CD8-positive, alpha-beta T cell (primary cell): ENCODE measurements at regions of chr1 and their contacts with region 1.

Region 1: GRCh38 chr1:175129997-175130648 is 62.5 kb downstream of the KIAA0040 start:
- DNase-seq: no peak
- ATAC-seq: no peak
- H3K4me3 ChIP-seq: no peak overlapping the region
- H3K4me3 Mint-ChIP-seq: no peak overlapping the region
- H3K27ac ChIP-seq: no peak overlapping the region
- H3K27ac Mint-ChIP-seq: no peak overlapping the region
- H3K4me1 ChIP-seq: no peaks in the 10 kb centered on the region
- H3K4me1 Mint-ChIP-seq: no peaks in the 10 kb centered on the region
- H3K27me3 ChIP-seq: no peaks in the 10 kb centered on the region
- H3K27me3 Mint-ChIP-seq: peaks cover 11% of the 10 kb centered on the region
- CTCF ChIP-seq: no peak

Region 2: GRCh38 chr1:173409613-173410012 is 1720.5 kb before region 1 on chr1:
- CTCF ChIA-PET with region 1: no interaction called
- POLR2A ChIA-PET with region 1: no interaction called
- intact Hi-C with region 1: loop called in 1 of 2 experiments (anchors 10 kb)
- DNase-seq: peak in 5 of 9 experiments; percentile 16 to 63 (median 44)
- ATAC-seq: peak; percentile 42
- H3K4me3 ChIP-seq: no peak overlapping the region
- H3K4me3 Mint-ChIP-seq: peak overlapping the region; percentile 47
- H3K27ac ChIP-seq: no peak overlapping the region
- H3K27ac Mint-ChIP-seq: peak overlapping the region; percentile 41
- H3K4me1 ChIP-seq: peaks cover 31% of the 10 kb centered on the region
- H3K4me1 Mint-ChIP-seq: peaks cover 35% of the 10 kb centered on the region
- H3K27me3 ChIP-seq: no peaks in the 10 kb centered on the region
- H3K27me3 Mint-ChIP-seq: no peaks in the 10 kb centered on the region
- CTCF ChIP-seq: no peak

Region 3: GRCh38 chr1:174262349-174263241 is 867.5 kb before region 1 on chr1:
- CTCF ChIA-PET with region 1: interaction called, 3 read pairs
- POLR2A ChIA-PET with region 1: no interaction called
- intact Hi-C with region 1: loop called (anchors 10 kb)
- DNase-seq: peak in 2 of 9 experiments; percentile 33 to 52
- ATAC-seq: no peak
- H3K4me3 ChIP-seq: no peak overlapping the region
- H3K4me3 Mint-ChIP-seq: no peak overlapping the region
- H3K27ac ChIP-seq: no peak overlapping the region
- H3K27ac Mint-ChIP-seq: no peak overlapping the region
- H3K4me1 ChIP-seq: no peaks in the 10 kb centered on the region
- H3K4me1 Mint-ChIP-seq: no peaks in the 10 kb centered on the region
- H3K27me3 ChIP-seq: no peaks in the 10 kb centered on the region
- H3K27me3 Mint-ChIP-seq: no peaks in the 10 kb centered on the region
- CTCF ChIP-seq: peak; percentile 55

Region 4: GRCh38 chr1:175146529-175147213 is 16.5 kb after region 1 on chr1:
- CTCF ChIA-PET with region 1: interaction called, 26 read pairs
- POLR2A ChIA-PET with region 1: no interaction called
- intact Hi-C with region 1: no loop called
- DNase-seq: peak; percentile 48 to 75 (median 67)
- ATAC-seq: peak; percentile 87
- H3K4me3 ChIP-seq: no peak overlapping the region
- H3K4me3 Mint-ChIP-seq: no peak overlapping the region
- H3K27ac ChIP-seq: no peak overlapping the region
- H3K27ac Mint-ChIP-seq: no peak overlapping the region
- H3K4me1 ChIP-seq: peaks cover 2% of the 10 kb centered on the region
- H3K4me1 Mint-ChIP-seq: peaks cover 3% of the 10 kb centered on the region
- H3K27me3 ChIP-seq: peaks cover 0 to under 1% of the 10 kb centered on the region in 2 experiments
- H3K27me3 Mint-ChIP-seq: peaks cover 28% of the 10 kb centered on the region
- CTCF ChIP-seq: peak; percentile 88

Region 5: DNA sequence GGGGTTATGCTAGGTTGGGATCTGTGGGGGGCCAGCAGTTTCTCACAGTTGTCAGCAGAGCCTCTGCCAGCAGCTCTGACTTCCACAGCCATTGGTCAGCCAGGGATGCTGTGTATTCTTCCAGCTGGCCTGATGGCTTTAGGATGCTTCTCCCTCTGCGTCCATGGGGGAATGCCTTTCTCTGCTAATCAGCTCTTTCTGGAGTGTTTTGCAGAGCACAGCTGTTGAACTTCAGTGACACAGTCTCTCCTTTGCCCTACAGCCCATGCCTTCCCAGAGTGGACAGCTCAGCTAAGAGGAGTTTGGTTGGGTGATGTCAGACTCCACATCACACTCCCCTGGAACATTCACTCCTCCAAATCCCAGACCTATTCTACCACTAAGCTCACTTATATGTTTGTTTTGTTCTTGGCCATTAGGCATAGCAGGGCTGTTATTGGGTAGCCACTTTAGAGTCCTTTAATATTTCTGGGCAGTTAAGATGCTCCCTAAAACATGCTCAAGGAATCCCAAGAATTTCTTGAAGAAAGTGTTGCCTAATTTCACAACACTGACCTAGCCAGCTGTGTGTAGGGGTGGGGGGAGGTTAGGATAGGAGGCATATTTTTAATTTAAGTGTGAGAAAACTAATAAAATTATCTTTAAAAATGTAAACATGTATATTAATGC is 137.7 kb after region 1 on chr1:
- CTCF ChIA-PET with region 1: no interaction called
- POLR2A ChIA-PET with region 1: no interaction called
- intact Hi-C with region 1: no loop called
- DNase-seq: no peak
- ATAC-seq: no peak
- H3K4me3 ChIP-seq: no peak overlapping the region
- H3K4me3 Mint-ChIP-seq: no peak overlapping the region
- H3K27ac ChIP-seq: no peak overlapping the region
- H3K27ac Mint-ChIP-seq: no peak overlapping the region
- H3K4me1 ChIP-seq: no peaks in the 10 kb centered on the region
- H3K4me1 Mint-ChIP-seq: no peaks in the 10 kb centered on the region
- H3K27me3 ChIP-seq: no peaks in the 10 kb centered on the region
- H3K27me3 Mint-ChIP-seq: no peaks in the 10 kb centered on the region
- CTCF ChIP-seq: no peak